WTC11 (cell line): ENCODE measurements at regions of chr11 and their contacts with region 1.

Region 1: DNA sequence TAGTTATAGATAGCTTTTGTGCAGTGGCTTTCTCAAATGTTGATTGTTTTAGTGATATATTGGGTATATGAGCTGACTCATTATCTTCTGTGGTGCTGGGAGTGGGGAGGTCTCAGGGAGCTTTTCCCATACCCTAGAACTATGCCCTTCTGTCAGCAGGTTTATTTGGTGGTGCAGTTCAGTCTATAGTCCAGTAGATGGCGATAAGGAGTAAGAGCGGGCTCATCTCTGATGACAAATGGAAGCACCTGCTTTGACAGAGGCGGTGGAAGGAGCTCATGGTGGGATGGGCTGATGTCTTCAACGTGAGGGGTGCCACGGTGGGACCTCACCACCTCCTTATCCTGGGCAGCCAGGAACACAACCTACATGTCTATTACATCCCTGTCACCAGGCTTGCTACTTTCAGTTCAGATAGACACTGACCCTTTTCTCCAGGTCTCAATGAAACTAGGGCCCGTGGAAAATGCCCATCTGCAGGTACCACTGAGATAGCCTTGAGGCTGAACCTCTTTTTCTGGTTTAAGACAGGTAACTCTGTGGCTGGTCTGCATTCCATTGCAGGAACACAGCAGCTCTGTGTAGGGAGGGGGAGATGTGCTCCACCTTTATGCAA is 13.0 kb upstream of the OR6A2 start:
- DNase-seq: peak; percentile 31
- ATAC-seq: peak; percentile 98
- H3K4me3 Mint-ChIP-seq: no peak overlapping the region
- H3K27ac Mint-ChIP-seq: no peak overlapping the region
- H3K4me1 Mint-ChIP-seq: peaks cover 3% of the 10 kb centered on the region
- H3K27me3 Mint-ChIP-seq: peaks cover 4% of the 10 kb centered on the region; the same call in 1 of the 2 replicates
- CTCF ChIP-seq: peak; percentile 89

Region 2: DNA sequence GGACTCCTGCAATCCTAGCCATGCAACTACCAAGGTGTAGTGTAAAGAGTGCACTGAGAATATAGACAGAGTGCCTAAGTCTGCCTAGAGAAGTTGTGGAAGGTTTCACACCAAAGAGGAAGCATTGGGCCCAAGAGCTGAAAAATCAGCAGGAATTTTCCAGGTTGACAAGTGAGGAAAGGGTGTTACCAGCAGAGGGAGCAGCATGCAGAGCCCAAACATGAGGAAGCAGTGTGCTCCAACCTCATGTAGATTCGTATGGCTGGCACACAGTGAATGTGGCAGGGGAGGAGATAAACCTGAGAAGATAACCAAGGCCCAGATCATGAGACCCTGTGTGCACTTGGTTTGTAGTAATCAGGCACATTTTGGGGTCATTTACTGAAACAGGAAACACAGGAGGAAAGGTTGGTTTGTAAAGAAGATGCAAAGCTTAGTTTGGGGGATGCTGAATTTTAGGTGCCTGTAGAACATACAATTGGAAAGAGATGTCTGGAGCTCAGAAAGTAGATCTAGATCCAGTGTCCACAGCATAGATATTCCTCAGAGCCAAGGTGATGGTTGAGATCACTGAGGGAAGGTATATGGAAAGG is 373.4 kb before region 1 on chr11:
- CTCF ChIA-PET with region 1: no interaction called
- POLR2A ChIA-PET with region 1: no interaction called
- DNase-seq: peak; percentile 58
- ATAC-seq: peak; percentile 72
- H3K4me3 Mint-ChIP-seq: no peak overlapping the region
- H3K27ac Mint-ChIP-seq: no peak overlapping the region
- H3K4me1 Mint-ChIP-seq: no peaks in the 10 kb centered on the region
- H3K27me3 Mint-ChIP-seq: no peaks in the 10 kb centered on the region
- CTCF ChIP-seq: peak; percentile 42; the same call in 1 of the 2 replicates

Region 3: DNA sequence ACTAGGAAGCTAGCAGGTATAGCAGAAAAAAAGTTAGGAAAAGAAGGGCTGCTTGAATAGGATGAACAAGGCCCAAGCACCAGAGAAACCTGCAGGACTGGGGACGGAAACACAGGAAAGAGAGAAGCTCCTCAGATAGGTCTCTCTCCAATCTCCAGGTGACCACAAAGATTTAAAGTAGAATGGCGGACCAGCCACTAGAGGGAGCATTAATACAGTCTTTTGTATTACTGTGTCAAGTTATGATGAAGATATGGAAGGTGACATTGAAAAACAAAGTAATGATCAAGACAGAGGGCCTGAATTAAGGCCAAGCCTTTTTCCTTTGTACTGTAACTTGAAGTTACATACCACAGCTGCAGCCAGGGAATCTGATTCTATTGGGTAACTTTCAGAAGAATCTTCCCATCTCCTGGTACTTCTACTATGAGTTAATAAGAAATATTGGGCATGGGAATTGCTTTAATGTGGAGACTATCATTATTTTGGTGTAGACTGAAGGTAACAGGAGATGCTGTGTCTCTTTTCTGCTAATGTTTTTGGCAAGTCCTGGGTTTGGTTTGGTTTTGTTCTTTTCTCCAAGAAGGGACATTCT is 74.5 kb before region 1 on chr11:
- CTCF ChIA-PET with region 1: interaction called, 16 read pairs
- POLR2A ChIA-PET with region 1: no interaction called
- DNase-seq: peak; percentile 28
- ATAC-seq: peak; percentile 89
- H3K4me3 Mint-ChIP-seq: no peak overlapping the region
- H3K27ac Mint-ChIP-seq: no peak overlapping the region
- H3K4me1 Mint-ChIP-seq: no peaks in the 10 kb centered on the region
- H3K27me3 Mint-ChIP-seq: no peaks in the 10 kb centered on the region; the same call in 1 of the 2 replicates
- CTCF ChIP-seq: peak; percentile 30; the same call in 1 of the 2 replicates

Region 4: GRCh38 chr11:6782720-6783119 is 29.8 kb before region 1 on chr11 and contains the start of gene OR2AG1:
- CTCF ChIA-PET with region 1: interaction called, 10 read pairs
- POLR2A ChIA-PET with region 1: no interaction called
- DNase-seq: no peak
- ATAC-seq: no peak
- H3K4me3 Mint-ChIP-seq: no peak within 1 kb of the TSS
- H3K27ac Mint-ChIP-seq: no peak within 1 kb of the TSS
- H3K4me1 Mint-ChIP-seq: no peaks in the 10 kb centered on the region
- H3K27me3 Mint-ChIP-seq: no peaks in the 10 kb centered on the region; the same call in 1 of the 2 replicates
- CTCF ChIP-seq: no peak
- total RNA-seq, gene OR2AG1: not detected in 3 replicates

Region 5: GRCh38 chr11:6825231-6825744 is 12.8 kb after region 1 on chr11:
- CTCF ChIA-PET with region 1: interaction called, 36 read pairs
- POLR2A ChIA-PET with region 1: no interaction called
- DNase-seq: no peak
- ATAC-seq: no peak
- H3K4me3 Mint-ChIP-seq: no peak overlapping the region
- H3K27ac Mint-ChIP-seq: no peak overlapping the region
- H3K4me1 Mint-ChIP-seq: 0 out of 2 replicates have a peak, but pooled peaks cover 3% of the 10 kb centered on the region
- H3K27me3 Mint-ChIP-seq: no peaks in the 10 kb centered on the region
- CTCF ChIP-seq: no peak

Region 6: GRCh38 chr11:6926208-6927029 is 113.9 kb after region 1 on chr11 and contains the start of gene ZNF215:
- CTCF ChIA-PET with region 1: interaction called, 22 read pairs
- POLR2A ChIA-PET with region 1: no interaction called
- DNase-seq: peak; percentile 89
- ATAC-seq: peak; percentile 94
- H3K4me3 Mint-ChIP-seq: peak within 1 kb of the TSS; percentile 99
- H3K27ac Mint-ChIP-seq: peak within 1 kb of the TSS; percentile 96
- H3K4me1 Mint-ChIP-seq: peaks cover 36% of the 10 kb centered on the region
- H3K27me3 Mint-ChIP-seq: no peaks in the 10 kb centered on the region; the same call in 1 of the 2 replicates
- CTCF ChIP-seq: no peak
- total RNA-seq, gene ZNF215: 13.8 to 15.8 TPM (median 14.1 TPM) in 3 replicates

Region 7: DNA sequence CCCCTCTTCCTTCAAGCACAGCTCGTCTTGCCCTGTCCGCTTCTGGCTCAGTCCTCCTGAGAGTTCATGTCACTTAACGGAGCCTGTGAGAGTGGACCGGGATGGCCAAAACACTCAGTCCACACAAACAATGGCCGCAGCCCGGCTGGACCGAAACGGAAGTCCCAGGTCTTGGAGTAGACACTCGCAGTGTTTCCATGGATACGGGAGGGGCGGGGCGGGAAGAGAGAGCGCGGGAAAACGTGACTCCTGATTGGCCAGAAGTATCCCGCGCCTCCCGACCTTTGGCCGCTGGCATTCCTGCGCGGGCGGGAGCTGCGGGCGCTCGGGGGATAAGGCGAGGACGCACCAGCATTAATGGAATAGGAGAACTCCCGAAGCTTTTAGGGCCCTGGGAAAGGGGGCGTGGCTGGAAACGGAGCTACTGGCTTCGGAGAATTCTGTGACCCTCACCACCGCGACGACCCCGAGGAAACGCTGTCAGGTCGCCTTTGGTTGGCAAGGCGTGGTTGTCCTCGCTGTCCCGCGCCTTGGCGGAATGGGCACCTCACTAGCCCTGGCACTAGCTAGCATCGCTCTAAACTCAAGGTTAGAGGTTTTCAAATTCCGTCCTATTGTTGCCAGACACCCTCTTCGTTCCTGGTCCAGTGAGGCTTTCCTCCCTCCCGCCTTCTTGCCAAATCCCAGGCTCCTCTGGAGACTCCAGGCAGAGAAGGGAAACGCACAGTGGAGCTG is 207.9 kb after region 1 on chr11 and contains the starts of genes NLRP14 and ZNF214:
- CTCF ChIA-PET with region 1: interaction called, 24 read pairs
- POLR2A ChIA-PET with region 1: no interaction called
- DNase-seq: peak; percentile 94
- ATAC-seq: peak; percentile 98
- H3K4me3 Mint-ChIP-seq: peak within 1 kb of the TSS; percentile 100
- H3K27ac Mint-ChIP-seq: peak within 1 kb of the TSS; percentile 97
- H3K4me1 Mint-ChIP-seq: peaks cover 9% of the 10 kb centered on the region
- H3K27me3 Mint-ChIP-seq: peaks cover 36% of the 10 kb centered on the region
- CTCF ChIP-seq: no peak
- total RNA-seq, gene NLRP14: 0.05 to 0.16 TPM (median 0.07 TPM) in 3 replicates
- total RNA-seq, gene ZNF214: 3.5 to 4.1 TPM (median 4.0 TPM) in 3 replicates